ENCODE measurements at regions of chr5 and their contacts with region 1.

Region 1: GRCh38 chr5:40823459-40823858 is 11.6 kb downstream of the RPL37 start:
- DNase-seq: no peak
- H3K4me3 ChIP-seq: no peak overlapping the region
- CTCF ChIP-seq: no peak

Region 2: GRCh38 chr5:40834391-40834848 is 11.0 kb after region 1 on chr5:
- CTCF ChIA-PET with region 1: no interaction called
- POLR2A ChIA-PET with region 1: interaction called, 16 read pairs
- DNase-seq: no peak
- H3K4me3 ChIP-seq: peak overlapping the region; percentile 98
- CTCF ChIP-seq: no peak